Activated CD4-positive, alpha-beta T cell treated with anti-CD3 and anti-CD28 coated beads, Interleukin-2, amount 10 ng/mL, durations not matched to agents 24 days and 14 days (primary cell): ENCODE measurements at regions of chr12 and their contacts with region 1.

Region 1: DNA sequence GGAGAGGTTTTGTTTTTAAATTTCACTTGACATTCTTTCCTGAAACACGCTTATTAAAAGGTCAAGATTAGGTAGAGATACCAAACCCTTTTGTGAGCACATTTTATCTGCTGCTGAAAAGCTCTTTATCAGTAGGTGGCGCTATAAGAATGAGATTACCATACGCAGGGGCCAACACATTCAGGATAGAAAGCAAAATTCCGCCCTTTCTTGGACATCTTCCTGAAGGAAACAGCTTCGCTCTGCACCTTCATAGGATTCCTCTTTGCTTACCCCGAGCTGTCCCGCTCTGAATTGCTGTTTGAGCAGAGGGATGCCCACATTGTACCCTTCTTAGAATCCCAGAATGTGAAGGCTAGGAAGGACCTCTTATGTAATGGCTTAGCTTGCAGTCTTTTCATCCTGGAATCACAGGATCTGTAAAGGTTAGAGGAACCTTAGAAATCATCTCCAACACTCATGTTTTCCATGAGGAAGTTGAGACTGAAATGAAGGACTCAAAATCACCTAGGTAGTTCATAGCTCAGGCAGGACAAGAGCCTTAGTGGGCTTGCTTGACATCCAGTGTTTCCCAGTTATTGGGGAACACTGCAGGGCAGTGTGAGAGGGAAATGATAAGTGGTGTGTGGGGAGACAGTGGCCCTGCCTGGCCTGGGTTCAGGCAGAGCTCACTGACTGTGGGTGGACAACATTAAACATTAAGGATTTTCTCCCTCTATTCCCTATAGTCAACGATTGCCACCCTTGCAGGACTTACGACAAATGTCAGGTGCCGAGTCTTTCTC is 38.7 kb upstream of the CRY1 start:
- DNase-seq: peak; percentile 76
- H3K4me3 Mint-ChIP-seq: no peak overlapping the region
- H3K27ac Mint-ChIP-seq: no peak overlapping the region
- H3K4me1 Mint-ChIP-seq: no peaks in the 10 kb centered on the region
- H3K27me3 Mint-ChIP-seq: peaks cover under 1% of the 10 kb centered on the region

Region 2: DNA sequence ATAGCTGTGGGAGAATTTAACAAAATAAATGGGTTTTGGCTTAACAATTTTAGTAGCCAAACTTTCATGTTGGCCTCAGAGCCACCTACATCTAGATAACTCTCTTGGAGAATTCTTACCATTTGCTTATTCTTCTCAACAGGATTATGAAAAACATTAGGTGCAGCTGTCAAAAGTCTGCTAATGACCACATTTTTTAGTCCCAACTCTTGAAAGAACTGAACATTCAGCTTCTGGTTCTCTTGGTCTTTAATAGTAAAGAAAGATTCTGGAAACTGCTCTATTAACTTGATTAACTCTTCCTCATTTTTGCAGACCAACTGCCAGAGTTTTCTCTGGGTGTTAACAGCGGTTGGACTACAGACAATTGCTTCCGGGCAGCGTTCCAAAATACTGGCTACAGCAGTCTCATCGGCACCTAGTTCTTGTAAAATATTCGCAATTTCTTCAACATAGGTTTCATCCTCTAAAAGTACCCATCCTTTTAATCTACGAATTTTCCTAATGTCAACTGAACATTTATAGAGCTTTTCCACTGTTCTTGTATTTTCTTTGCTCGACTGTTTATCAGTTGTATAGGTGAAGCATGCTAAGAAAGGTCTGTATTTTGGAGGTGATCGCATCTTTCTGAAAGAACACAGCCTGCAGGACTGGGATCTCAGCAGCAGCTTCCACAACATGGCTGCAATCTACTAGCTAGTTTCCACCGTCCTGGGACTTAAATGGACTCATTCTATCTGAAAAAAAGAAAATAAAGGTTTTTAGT is 153.8 kb before region 1 on chr12:
- intact Hi-C with region 1: no loop called
- DNase-seq: no peak
- H3K4me3 Mint-ChIP-seq: no peak overlapping the region
- H3K27ac Mint-ChIP-seq: no peak overlapping the region
- H3K4me1 Mint-ChIP-seq: peaks cover 5% of the 10 kb centered on the region
- H3K27me3 Mint-ChIP-seq: no peaks in the 10 kb centered on the region

Region 3: DNA sequence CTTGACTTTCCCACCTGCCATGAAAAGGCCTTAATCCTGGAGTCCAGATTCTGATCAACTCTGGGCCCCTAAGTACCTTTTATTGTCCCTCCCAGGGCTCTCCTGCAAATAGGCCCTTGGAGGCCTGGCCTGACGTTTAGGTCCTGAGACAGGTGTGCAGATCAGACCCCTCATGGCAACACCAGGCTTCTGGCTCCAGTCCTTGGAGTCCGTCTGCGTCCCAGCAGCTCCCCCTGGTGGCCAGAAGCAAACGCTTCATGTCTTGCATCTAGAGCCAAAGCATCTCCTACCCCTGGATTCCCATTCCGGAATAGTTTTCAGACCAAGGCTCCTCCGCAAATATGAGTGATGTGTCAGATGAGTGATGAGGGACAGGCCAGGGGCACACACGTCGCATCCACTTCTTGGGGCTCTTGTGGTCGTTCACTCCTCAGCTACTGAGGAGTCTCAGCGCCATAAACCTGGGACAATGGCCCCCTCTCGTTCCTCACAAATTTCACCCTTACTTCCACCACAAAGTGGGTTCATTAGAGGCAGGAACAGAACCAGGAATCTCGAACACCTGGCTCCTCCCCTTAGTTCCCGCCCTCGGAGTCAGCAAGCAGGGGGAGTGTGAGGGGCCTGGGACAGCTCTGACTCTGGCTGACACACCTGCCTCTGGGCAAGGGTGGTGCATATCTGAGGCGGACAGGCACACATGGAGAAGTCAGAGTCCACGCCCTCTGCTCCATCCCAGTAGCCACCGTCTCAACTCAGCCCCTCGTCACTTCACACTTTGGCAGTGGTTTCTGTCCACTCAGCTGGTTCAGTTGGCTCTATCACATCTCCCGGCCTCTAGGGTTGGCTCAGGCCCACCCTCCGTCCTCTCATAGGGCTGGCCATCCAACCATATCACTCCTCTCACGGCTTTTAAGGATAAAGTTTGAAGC is 475.7 kb after region 1 on chr12:
- intact Hi-C with region 1: loop called (anchors 1 kb)
- DNase-seq: peak; percentile 93
- H3K4me3 Mint-ChIP-seq: no peak overlapping the region
- H3K27ac Mint-ChIP-seq: no peak overlapping the region
- H3K4me1 Mint-ChIP-seq: peaks cover 3% of the 10 kb centered on the region
- H3K27me3 Mint-ChIP-seq: no peaks in the 10 kb centered on the region